Mammary epithelial cell (primary cell): ENCODE measurements at regions of chr19 and their contacts with region 1.

Region 1: DNA sequence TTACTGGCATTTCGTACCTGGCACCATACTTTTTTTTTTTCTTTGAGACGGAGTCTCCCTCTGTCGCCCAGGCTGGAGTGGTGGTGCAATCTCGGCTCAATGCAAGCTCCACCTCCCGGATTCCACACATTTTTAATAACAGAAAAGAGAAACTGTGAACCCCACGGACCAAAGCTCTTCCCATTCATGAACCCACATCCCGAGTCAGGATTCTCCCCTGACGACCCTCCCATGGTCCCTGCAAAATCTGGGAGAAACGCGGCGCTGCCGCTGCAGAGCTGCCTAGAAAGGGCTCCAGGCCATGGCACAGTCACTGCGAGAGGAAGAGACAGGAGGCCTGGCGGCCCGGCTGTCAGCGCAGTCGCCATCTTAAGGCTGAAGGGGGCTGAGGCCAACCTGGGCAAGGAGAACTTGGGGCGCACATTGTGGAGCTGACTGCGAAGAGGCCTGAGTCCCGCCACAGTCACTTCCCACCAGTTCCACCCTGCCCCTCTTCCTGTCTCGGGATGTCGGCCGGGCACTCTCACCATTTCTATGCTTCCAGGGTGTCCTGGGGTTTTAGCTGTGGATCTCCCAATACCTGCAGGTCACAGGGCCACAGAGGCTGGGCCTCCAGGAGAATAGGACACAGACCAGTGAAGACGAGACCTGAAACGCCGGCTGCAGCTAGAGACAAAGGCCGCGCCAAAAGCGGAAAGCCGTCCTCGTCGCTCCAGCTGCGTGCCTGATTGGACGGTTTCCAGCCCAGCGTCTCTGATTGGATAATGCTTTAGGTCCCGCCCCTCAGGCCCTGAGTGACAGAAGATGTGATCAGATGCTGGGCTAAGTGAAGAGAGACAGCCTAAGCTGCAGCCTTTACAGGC is 71.0 kb downstream of the ZNF486 start:
- DNase-seq: peak; percentile 85
- H3K4me3 ChIP-seq: peak overlapping the region; percentile 29 to 45 (median 43)
- H3K27ac ChIP-seq: no peak overlapping the region
- H3K4me1 ChIP-seq: no peaks in the 10 kb centered on the region
- H3K27me3 ChIP-seq: no peaks in the 10 kb centered on the region
- CTCF ChIP-seq: no peak

Region 2: DNA sequence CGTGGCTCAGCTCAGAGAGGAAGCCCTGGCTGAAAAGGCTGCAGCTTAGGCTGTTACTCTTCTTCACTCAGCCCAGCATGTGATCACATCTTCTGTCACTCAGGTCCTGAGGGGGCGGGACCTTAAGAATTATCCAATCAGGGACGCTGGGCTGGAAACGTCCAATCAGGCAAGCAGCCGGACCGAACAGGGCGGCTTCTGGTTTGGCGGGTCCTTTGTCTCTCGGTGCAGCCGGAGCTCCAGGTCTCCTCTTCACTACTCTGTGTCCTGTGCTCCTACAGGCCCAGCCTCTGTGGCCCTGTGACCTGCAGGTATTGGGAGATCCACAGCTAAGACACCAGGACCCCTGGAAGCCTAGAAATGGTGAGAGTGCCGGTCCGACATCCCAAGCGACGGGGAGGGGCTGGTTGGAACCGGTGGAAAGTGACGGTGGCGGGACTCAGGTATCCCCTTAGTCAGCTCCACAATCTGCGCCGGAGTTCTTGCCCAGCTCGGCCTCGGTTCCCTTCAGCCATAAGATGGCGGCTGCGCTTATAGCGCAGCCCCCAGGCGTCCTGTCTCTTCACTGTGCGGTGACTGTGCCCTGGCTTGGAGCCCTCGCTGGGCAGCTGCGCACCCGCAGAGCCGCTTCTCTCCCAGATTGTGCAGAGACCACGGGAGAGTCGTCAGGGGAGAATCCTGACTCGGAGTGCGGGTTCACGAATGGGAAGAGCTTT is 337.1 kb before region 1 on chr19 and contains the start of gene ZNF93:
- CTCF ChIA-PET with region 1: no interaction called
- dilution Hi-C with region 1: no loop called
- in situ Hi-C with region 1: no loop called
- intact Hi-C with region 1: loop called (anchors 5 kb)
- DNase-seq: peak; percentile 95
- H3K4me3 ChIP-seq: peak within 1 kb of the TSS; percentile 41 to 50 (median 43)
- H3K27ac ChIP-seq: no peak within 1 kb of the TSS
- H3K4me1 ChIP-seq: no peaks in the 10 kb centered on the region
- H3K27me3 ChIP-seq: no peaks in the 10 kb centered on the region
- CTCF ChIP-seq: no peak
- total RNA-seq, gene ZNF93: 6.4 to 16.8 TPM

Region 3: GRCh38 chr19:20039203-20039723 is 198.7 kb before region 1 on chr19 and contains the start of gene ZNF682:
- CTCF ChIA-PET with region 1: no interaction called
- dilution Hi-C with region 1: no loop called
- in situ Hi-C with region 1: no loop called
- intact Hi-C with region 1: loop called (anchors 5 kb)
- DNase-seq: peak; percentile 93
- H3K4me3 ChIP-seq: peak within 1 kb of the TSS in 1 of 3 experiments; percentile 33
- H3K27ac ChIP-seq: no peak within 1 kb of the TSS
- H3K4me1 ChIP-seq: no peaks in the 10 kb centered on the region
- H3K27me3 ChIP-seq: no peaks in the 10 kb centered on the region
- CTCF ChIP-seq: no peak
- total RNA-seq, gene ZNF682: 2.2 to 6.8 TPM

Region 4: GRCh38 chr19:20077791-20078463 is 160.1 kb before region 1 on chr19 and contains the start of gene ZNF90:
- CTCF ChIA-PET with region 1: no interaction called
- dilution Hi-C with region 1: no loop called
- in situ Hi-C with region 1: no loop called
- intact Hi-C with region 1: loop called (anchors 10 kb)
- DNase-seq: peak; percentile 96
- H3K4me3 ChIP-seq: peak within 1 kb of the TSS in 1 of 3 experiments; percentile 22
- H3K27ac ChIP-seq: no peak within 1 kb of the TSS
- H3K4me1 ChIP-seq: no peaks in the 10 kb centered on the region
- H3K27me3 ChIP-seq: no peaks in the 10 kb centered on the region
- CTCF ChIP-seq: no peak
- total RNA-seq, gene ZNF90: 2.2 to 8.7 TPM